ENCODE measurements at regions of chr15 and their contacts with region 1.

Region 1: GRCh38 chr15:85543741-85544155 is 163.3 kb downstream of the AKAP13 start:
- DNase-seq: peak; percentile 62
- H3K4me3 Mint-ChIP-seq: peak overlapping the region; percentile 52
- H3K27ac Mint-ChIP-seq: peak overlapping the region; percentile 62
- H3K4me1 Mint-ChIP-seq: peaks cover 74% of the 10 kb centered on the region
- H3K27me3 Mint-ChIP-seq: no peaks in the 10 kb centered on the region

Region 2: DNA sequence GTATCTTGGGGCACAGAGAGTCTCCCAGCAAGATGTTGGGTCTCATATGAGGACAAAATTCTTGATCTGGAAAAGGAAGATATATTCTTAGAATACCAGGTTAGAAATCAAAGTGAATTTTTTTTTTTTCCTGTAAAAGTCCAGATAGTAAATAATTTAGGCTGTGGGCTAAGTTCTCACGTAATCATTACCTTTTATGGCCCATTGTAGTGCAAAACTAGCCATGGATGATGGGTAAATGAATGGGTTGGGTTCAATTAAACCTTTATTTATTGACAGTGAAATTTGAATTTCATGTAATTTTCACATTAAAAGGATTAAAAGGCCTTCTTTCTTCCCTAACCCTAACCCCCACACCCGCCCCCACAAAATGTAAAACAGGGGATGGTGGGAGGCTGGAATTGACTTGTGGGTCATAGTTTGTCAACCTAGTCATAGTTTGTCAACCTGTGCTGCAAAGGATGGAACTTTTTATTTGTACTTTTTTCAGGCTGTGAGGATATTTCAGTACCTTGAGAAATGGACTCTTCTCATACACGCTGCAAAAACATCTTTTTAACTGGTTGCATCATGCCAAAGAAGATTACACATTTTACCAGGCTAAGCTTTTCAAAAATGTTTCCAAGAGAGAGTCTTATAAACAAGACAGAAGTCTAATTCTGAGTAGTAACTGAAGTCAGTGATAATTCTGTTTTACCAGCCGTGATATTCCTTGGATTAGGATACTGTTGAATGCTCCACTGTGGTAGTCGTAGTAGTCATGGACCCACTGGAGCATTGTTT is 24.6 kb before region 1 on chr15:
- CTCF ChIA-PET with region 1: no interaction called
- intact Hi-C with region 1: no loop called
- DNase-seq: no peak
- H3K4me3 Mint-ChIP-seq: no peak overlapping the region
- H3K27ac Mint-ChIP-seq: no peak overlapping the region
- H3K4me1 Mint-ChIP-seq: peaks cover 27% of the 10 kb centered on the region
- H3K27me3 Mint-ChIP-seq: no peaks in the 10 kb centered on the region

Region 3: GRCh38 chr15:85555875-85556617 is 12.3 kb after region 1 on chr15:
- CTCF ChIA-PET with region 1: interaction called, 5 read pairs
- intact Hi-C with region 1: loop called (anchors 1 kb)
- DNase-seq: no peak
- H3K4me3 Mint-ChIP-seq: no peak overlapping the region
- H3K27ac Mint-ChIP-seq: peak overlapping the region; percentile 48
- H3K4me1 Mint-ChIP-seq: peaks cover 52% of the 10 kb centered on the region
- H3K27me3 Mint-ChIP-seq: no peaks in the 10 kb centered on the region

Region 4: GRCh38 chr15:85597155-85597815 is 53.5 kb after region 1 on chr15:
- CTCF ChIA-PET with region 1: no interaction called
- intact Hi-C with region 1: loop called (anchors 5 kb)
- DNase-seq: peak; percentile 55
- H3K4me3 Mint-ChIP-seq: no peak overlapping the region
- H3K27ac Mint-ChIP-seq: no peak overlapping the region
- H3K4me1 Mint-ChIP-seq: peaks cover 37% of the 10 kb centered on the region
- H3K27me3 Mint-ChIP-seq: no peaks in the 10 kb centered on the region

Region 5: DNA sequence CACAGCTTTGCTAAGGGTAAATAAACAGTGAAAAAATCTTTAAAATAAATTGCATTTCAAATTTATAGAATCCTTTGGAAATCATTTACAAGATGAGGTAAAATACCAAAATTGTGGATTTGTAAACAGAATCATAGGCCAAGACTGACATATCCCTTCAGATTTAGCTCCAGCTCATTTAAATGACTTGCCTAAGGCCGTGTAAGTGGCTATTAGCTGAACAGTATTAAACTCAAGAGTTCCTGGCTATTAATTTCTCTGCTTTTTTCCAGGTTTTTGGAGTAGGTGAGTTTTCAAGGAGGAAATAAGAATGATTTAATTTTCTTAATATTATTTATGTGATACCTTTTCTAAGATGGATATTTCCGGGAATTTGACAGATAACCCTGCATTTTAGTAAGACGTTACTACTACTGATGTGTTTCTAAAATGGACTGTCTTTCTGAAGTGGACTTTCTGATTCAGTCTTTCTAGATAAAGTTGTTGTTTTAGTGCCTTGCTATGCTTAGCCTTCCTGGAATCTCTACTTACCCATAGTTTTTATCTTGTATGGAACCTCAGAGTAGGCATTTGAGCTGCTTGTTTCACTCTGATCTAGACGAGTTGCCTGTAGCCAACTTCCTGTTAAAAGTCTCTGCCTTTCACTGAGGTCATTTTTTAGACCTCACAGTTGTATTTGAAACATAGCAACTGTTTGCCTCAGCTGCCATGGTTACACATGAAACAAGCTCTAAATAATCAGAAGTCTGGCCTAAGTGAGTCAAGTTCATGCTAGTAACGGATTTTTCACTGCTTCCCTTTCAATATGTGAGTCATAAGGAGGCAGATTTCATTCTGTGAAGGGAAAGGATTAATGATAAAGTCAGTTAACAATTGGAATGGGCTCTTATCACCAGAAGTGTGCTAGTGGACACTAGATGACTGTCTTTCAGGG is 124.0 kb after region 1 on chr15:
- CTCF ChIA-PET with region 1: no interaction called
- intact Hi-C with region 1: loop called (anchors 1 kb)
- DNase-seq: peak; percentile 78
- H3K4me3 Mint-ChIP-seq: no peak overlapping the region
- H3K27ac Mint-ChIP-seq: peak overlapping the region; percentile 93
- H3K4me1 Mint-ChIP-seq: peaks cover 26% of the 10 kb centered on the region
- H3K27me3 Mint-ChIP-seq: no peaks in the 10 kb centered on the region

Region 6: DNA sequence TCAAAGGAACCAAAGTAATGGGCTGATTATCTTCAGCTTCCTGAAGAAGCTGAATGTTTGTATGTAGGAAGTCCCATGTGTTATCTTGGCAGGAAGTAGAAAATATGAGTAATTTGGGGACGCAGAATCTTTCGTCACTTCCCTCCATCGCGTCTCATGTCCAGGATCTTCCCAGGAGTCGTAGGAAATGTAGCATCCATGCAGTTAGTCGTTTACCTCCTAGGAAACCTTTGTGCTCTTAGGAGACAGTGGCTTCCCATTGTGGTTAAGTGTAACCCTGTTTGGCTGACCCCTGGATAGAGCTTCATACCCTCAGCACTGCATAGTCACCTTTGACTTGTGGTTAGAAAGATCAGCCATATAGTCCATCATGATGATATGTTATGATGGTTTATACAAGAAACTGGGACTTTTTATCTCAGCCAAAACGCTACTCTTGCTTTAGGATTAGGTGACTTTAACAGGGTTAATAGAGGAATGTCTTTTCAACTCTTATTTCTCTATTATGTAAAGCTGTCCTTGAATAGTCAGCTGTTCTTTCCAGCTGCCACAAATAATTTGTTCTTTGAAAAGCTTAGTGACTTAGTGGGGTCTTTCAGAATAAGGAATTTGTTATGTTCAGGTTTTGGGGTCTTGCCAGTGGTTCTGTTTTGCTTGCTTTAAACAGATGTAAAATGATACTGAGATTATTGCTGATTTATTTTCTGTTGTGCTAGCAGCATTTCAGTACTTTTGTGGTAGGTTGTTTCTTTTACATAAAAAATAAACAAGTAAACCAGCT is 158.8 kb after region 1 on chr15:
- CTCF ChIA-PET with region 1: interaction called, 3 read pairs
- intact Hi-C with region 1: loop called (anchors 1 kb)
- DNase-seq: peak; percentile 56
- H3K4me3 Mint-ChIP-seq: peak overlapping the region; percentile 58
- H3K27ac Mint-ChIP-seq: peak overlapping the region; percentile 98
- H3K4me1 Mint-ChIP-seq: peaks cover 71% of the 10 kb centered on the region
- H3K27me3 Mint-ChIP-seq: no peaks in the 10 kb centered on the region

Region 7: GRCh38 chr15:85723960-85724945 is 180.5 kb after region 1 on chr15:
- CTCF ChIA-PET with region 1: no interaction called
- intact Hi-C with region 1: loop called (anchors 5 kb)
- DNase-seq: peak; percentile 41
- H3K4me3 Mint-ChIP-seq: peak overlapping the region; percentile 43
- H3K27ac Mint-ChIP-seq: peak overlapping the region; percentile 97
- H3K4me1 Mint-ChIP-seq: peaks cover 67% of the 10 kb centered on the region
- H3K27me3 Mint-ChIP-seq: no peaks in the 10 kb centered on the region

Measured in activated naive CD4-positive, alpha-beta T cell treated with anti-CD3 and anti-CD28 coated beads for 36 hours (primary cell).